ENCODE measurements at regions of chr1 and their contacts with region 1.

Region 1: DNA sequence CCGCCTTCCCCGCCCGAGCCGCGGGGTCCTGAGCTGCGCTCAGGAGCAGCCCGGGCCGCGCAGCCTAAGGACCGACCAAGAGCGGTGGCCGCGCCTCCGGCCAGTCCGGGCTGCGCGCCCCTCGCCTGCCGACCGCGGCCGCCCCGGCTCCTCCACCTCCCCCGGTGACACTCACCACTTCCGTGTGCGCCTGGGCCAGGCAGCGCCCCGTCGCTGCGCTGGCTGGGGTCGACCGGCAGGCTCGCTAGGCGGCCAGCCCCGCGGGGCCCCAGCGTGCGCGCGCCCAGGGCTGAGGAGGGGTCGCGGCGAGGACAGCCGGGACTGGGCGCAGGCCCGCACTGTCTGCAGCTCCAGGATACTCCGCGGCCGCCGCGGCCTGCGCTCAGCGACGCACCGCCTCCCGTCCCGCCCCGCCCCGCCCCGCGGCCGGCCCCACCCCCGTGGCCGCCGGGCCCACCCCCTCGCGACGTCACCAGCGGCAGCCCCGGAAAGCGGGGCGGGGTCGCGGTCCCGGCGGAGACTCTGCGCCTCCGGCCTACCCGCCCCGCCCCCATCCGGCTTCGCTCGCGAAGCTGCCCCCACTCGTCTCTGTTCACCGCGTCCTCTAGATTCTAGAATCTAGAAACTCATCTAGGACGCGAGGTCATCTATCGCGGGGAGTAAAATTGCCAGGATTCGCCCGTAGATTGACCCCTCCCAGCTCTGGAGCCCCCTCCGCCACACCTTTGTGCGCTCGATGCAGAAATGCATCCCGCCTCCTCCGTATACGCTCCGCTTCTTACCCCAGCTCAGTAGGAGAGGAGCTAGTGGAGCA is at the start of gene JAK1:
- DNase-seq: peak; percentile 68 to 71
- ATAC-seq: peak; percentile 83 to 84
- H3K4me3 ChIP-seq: peak within 1 kb of the TSS; percentile 78 to 93 (median 83)
- H3K27ac ChIP-seq: peak within 1 kb of the TSS; percentile 91 to 97 (median 94)
- H3K4me1 ChIP-seq: peaks cover 38 to 39% of the 10 kb centered on the region in 2 donors
- H3K27me3 ChIP-seq: no peaks in the 10 kb centered on the region
- CTCF ChIP-seq: no peak
- POLR2A ChIP-seq: peak; percentile 90 to 97
- total RNA-seq, gene JAK1: 121 to 241 (median 165) TPM

Region 2: GRCh38 chr1:64864018-64864940 is 102.1 kb before region 1 on chr1:
- in situ Hi-C with region 1: loop called in 1 of 4 experiments (anchors 10 kb)
- intact Hi-C with region 1: loop called (anchors 5 kb)
- DNase-seq: peak; percentile 44 to 54
- ATAC-seq: peak; percentile 48 to 51
- H3K4me3 ChIP-seq: no peak overlapping the region
- H3K27ac ChIP-seq: peak overlapping the region; percentile 35 to 69 (median 52)
- H3K4me1 ChIP-seq: peaks cover 6 to 11% of the 10 kb centered on the region in 2 donors
- H3K27me3 ChIP-seq: no peaks in the 10 kb centered on the region
- CTCF ChIP-seq: no peak
- POLR2A ChIP-seq: peak in 1 of 2 donors; percentile 14

Region 3: DNA sequence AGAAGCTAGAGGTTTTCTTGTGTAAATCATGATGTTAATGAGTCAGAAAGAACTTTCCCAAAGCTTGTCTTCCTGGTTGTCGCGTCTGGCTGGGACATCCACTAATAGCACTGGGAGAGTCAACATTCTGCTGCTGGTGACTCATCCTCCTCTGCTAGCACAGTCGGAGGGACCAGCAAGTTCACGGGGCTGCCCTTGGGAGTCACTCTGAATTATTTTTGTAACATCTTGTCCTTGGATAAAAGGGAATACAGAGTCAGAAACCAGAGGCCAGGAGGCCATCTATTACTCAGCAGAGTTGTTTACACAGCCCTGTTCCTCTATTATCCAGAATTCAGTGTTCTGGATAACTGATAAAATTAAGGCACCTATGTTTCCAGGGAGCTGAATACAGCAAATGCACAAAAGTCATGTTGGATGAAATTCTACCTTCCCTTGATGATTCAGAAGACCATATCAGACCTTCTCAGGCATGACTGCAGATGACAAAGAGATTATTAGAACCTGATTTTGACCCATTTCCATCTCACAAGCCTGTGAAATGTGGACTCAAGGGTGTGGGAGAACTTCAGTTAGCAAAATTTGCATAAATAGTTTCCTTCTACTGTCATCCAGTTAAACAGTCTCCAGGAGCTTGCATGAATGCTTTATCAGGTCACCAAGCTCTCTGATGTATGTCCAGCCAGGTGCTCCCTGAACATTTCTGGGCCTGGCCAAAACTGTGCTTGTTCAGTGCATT is 68.1 kb before region 1 on chr1:
- in situ Hi-C with region 1: loop called in 1 of 4 experiments (anchors 5 kb)
- intact Hi-C with region 1: loop called (anchors 2 kb)
- DNase-seq: peak; percentile 96 to 98
- ATAC-seq: peak; percentile 96 to 98
- H3K4me3 ChIP-seq: peak overlapping the region in 2 of 4 donors; percentile 22 to 34
- H3K27ac ChIP-seq: peak overlapping the region; percentile 85 to 97 (median 92)
- H3K4me1 ChIP-seq: peaks cover 77 to 79% of the 10 kb centered on the region in 2 donors
- H3K27me3 ChIP-seq: no peaks in the 10 kb centered on the region
- CTCF ChIP-seq: no peak
- POLR2A ChIP-seq: peak in 1 of 2 donors; percentile 55

Region 4: DNA sequence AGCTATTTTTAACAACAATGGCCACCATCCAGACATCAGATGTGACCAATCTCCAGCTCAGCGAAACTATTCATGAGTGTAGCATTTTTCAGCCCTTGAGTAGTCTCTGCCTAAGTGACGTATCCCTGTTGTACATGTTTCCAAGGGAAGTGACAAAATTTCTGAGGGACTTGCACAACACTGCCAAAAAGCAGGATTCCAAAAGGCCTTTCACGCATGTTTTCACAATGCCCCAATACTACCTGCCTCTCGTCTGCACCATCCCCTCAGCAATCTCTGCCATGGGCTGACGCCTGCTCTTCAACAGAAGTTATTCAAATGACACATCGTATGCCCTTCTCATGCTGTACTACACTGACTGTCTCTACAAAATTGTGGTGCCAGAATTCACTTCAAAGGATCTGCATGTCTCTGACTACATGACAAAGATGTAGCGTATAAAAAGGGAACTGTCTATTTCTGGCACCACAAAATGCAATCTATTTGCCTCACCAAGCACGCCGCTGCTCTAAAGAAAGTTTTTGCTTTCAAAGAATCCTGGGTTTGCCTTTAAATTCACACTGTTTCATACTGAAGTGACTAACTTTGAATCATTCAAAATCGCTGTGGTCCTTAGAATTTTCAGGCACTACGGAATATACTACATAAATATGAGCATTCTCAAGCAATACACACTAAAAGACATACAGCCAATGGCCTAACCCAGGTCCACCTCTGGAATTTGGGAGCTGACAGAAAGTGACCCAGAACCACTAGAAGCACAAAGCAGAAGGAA is 32.9 kb before region 1 on chr1:
- in situ Hi-C with region 1: no loop called
- intact Hi-C with region 1: loop called (anchors 1 kb)
- DNase-seq: peak; percentile 48 to 66
- ATAC-seq: peak; percentile 59 to 60
- H3K4me3 ChIP-seq: peak overlapping the region; percentile 3 to 35 (median 14)
- H3K27ac ChIP-seq: peak overlapping the region; percentile 81 to 87 (median 82)
- H3K4me1 ChIP-seq: peaks cover 69 to 76% of the 10 kb centered on the region in 2 donors
- H3K27me3 ChIP-seq: no peaks in the 10 kb centered on the region
- CTCF ChIP-seq: no peak
- POLR2A ChIP-seq: no peak

Region 5: GRCh38 chr1:65002508-65003315 is 36.3 kb after region 1 on chr1:
- in situ Hi-C with region 1: no loop called
- intact Hi-C with region 1: loop called (anchors 2 kb)
- DNase-seq: peak; percentile 80 to 93
- ATAC-seq: peak; percentile 82 to 84
- H3K4me3 ChIP-seq: peak overlapping the region; percentile 60 to 87 (median 80)
- H3K27ac ChIP-seq: peak overlapping the region; percentile 93 to 100 (median 96)
- H3K4me1 ChIP-seq: peaks cover 10 to 13% of the 10 kb centered on the region in 2 donors
- H3K27me3 ChIP-seq: no peaks in the 10 kb centered on the region
- CTCF ChIP-seq: no peak
- POLR2A ChIP-seq: peak; percentile 78 to 81

Region 6: DNA sequence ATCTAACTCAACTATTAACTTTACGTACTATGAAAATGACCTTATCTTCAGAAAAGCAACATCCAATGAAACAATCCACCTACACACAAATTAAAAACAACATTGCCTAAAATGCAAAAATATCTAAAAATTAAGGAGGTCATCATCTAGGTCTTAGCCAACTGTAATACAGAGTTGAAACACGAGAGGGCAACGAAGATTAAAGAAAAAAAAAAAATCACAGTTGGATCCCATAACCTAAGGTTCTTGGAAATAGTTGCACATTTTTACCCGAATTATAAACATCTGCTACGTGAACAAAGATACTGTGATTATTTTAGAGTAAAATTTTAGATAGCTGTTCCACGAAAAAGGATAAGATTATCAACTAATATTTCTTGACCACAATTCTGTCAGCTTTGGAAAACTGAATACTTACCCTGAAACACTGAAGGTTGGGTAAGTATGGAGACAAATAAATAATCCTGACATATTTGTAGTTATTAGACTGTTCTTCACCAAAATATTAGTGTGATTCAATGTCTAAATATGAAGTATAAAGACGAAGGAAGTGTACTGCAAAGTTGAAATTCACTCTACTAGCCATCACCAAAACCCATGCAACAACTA is 93.7 kb after region 1 on chr1:
- in situ Hi-C with region 1: no loop called
- intact Hi-C with region 1: loop called (anchors 1 kb)
- DNase-seq: no peak
- ATAC-seq: no peak
- H3K4me3 ChIP-seq: no peak overlapping the region
- H3K27ac ChIP-seq: peak overlapping the region; percentile 42 to 66 (median 54)
- H3K4me1 ChIP-seq: peaks cover 94 to 95% of the 10 kb centered on the region in 2 donors
- H3K27me3 ChIP-seq: no peaks in the 10 kb centered on the region
- CTCF ChIP-seq: peak; percentile 55 to 82 (median 67)
- POLR2A ChIP-seq: no peak

Region 7: DNA sequence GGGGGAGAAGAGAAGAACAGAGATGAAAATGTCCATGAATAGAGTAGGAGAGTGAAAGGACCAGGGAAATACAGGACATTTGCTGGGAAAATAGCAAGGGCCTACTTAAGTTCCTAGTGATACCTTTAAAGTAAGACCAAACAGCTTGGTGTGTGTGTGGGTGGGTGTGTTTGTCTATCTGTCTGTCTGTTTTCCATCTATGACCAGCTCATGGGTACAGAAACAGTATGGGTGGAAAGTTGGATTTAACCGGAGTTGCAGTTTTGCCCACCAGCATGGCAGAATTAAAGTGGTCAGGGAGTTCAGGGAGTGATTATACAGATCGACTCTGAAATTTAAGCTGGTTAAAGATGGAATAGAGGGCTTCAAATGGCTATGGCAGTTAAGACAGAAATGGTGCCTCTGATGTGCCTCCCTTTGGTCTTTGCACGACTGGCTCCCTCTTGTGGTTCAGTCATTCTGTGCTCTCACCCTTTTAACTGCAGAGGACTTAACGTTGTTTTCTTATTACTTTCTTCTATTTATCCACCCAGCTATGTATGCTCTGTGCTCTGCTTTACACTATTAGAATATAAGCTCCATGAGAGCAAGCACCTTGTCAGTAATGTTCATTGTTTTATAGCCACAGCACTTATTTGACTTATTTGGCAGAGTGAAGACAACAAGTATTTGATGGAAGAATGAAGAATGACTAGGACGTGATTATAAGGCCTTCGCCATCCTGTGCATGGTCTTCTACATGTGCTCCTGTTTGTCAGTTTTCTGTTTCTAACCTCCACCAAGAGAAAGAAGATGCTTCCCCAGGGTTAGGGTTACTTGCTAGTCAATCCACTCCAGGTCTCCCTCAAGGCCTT is 109.0 kb after region 1 on chr1:
- in situ Hi-C with region 1: loop called in 1 of 4 experiments (anchors 10 kb)
- intact Hi-C with region 1: no loop called
- DNase-seq: peak; percentile 32 to 49
- ATAC-seq: peak; percentile 89 to 95
- H3K4me3 ChIP-seq: no peak overlapping the region
- H3K27ac ChIP-seq: no peak overlapping the region
- H3K4me1 ChIP-seq: no peaks in the 10 kb centered on the region
- H3K27me3 ChIP-seq: no peaks in the 10 kb centered on the region
- CTCF ChIP-seq: peak; percentile 70 to 84 (median 76)
- POLR2A ChIP-seq: no peak

Measured in gastrocnemius medialis (tissue), 4 donors.